PC-9 (cell line): ENCODE measurements at regions of chr6 and their contacts with region 1.

Region 1: DNA sequence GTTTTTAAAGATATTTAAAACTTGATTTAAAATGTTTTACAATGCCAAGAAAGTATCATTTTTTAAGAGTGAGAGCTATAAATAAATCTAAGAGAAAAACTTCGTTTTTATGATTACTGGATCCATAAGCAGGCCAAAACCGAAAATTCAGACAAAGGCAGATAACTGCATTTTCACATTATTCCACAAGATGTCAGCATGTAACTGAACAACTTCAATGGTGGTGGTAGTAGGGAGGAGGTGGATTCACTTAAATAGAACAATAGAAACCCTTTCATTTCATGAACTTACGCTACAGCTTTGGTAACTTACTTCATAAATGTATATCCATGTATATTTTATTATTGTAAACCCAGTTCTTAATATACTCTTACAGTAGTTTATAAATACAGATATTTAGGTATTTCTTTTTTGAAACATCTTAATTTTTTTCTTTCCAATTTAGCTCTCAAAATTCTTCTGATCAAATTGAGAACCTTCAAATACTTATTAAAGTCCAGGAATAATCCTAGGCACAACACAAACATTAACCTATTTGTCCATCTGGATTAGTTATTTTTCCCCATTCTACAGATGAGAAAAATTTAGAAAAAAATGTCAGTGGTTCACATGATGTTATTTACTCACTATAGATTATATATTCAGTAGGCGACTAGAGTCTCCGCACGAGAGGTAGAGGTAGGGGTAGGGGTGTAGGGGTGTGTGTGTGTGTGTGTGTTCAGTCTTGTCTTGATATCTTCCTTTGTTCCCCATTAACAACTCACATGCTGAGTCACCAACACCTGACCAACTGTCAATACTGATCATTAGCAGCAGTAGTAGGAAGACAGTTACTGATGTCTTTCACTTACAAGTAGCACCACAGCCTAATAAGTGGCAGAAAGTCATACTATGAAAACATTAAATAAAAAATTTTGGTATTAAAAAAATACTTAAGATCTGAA is 111.5 kb downstream of the ARHGAP18 start:
- DNase-seq: peak; percentile 5 to 63
- H3K4me3 ChIP-seq: no peak overlapping the region
- H3K27ac ChIP-seq: no peak overlapping the region
- H3K4me1 ChIP-seq: no peaks in the 10 kb centered on the region
- H3K27me3 ChIP-seq: no peaks in the 10 kb centered on the region
- CTCF ChIP-seq: peak; percentile 96

Region 2: GRCh38 chr6:128870746-128871145 is 727.8 kb before region 1 on chr6:
- CTCF ChIA-PET with region 1: no interaction called
- POLR2A ChIA-PET with region 1: interaction called, 15 read pairs
- intact Hi-C with region 1: no loop called
- DNase-seq: no peak
- H3K4me3 ChIP-seq: no peak overlapping the region
- H3K27ac ChIP-seq: no peak overlapping the region
- H3K4me1 ChIP-seq: no peaks in the 10 kb centered on the region
- H3K27me3 ChIP-seq: no peaks in the 10 kb centered on the region
- CTCF ChIP-seq: no peak

Region 3: DNA sequence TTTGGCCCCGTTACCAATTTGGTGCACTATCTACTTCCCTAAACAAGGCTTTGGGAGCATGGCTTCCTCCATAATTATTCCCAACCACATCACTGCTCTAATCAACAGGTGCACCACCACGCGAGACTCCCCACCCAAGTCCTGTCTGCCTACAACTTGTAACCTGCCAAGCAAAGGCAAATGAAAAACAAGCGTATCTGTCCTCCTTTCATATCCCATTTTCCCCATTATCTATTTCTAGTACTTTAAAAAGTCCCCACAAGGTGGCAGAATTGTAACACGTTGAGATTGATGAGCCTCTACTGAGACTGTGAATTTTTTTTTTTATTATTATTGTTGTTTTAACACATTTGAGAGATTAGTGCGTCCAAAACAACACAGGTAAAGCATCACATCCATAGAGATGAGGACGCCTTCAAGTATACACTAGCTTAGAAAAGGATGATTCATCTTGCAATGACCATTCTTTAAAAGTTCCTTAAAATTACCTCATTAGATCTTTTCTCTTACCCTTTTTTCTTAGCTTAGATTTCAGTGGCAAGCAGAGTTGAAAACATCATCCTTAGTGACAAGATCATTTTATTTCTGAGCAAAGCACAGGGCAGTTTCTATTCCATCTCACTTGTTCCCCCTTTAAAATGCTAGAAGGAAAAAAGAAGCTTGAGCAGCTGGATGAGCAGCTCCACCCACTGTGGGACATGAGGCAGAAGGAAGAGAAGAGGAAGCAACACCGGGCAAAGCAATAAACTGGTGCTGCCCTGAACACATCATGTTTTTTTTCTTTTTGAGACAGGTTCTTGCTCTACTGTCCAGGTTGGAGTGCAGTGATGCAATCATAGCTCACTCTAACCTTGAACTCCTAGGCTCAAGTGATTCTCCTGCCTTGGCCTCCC is 99.3 kb before region 1 on chr6:
- CTCF ChIA-PET with region 1: no interaction called
- POLR2A ChIA-PET with region 1: no interaction called
- intact Hi-C with region 1: loop called (anchors 2 kb)
- DNase-seq: peak in 1 of 2 experiments; percentile 57
- H3K4me3 ChIP-seq: peak overlapping the region; percentile 15; the same call in 1 of the 2 replicates
- H3K27ac ChIP-seq: no peak overlapping the region
- H3K4me1 ChIP-seq: peaks cover 25% of the 10 kb centered on the region
- H3K27me3 ChIP-seq: no peaks in the 10 kb centered on the region
- CTCF ChIP-seq: peak; percentile 96

Region 4: DNA sequence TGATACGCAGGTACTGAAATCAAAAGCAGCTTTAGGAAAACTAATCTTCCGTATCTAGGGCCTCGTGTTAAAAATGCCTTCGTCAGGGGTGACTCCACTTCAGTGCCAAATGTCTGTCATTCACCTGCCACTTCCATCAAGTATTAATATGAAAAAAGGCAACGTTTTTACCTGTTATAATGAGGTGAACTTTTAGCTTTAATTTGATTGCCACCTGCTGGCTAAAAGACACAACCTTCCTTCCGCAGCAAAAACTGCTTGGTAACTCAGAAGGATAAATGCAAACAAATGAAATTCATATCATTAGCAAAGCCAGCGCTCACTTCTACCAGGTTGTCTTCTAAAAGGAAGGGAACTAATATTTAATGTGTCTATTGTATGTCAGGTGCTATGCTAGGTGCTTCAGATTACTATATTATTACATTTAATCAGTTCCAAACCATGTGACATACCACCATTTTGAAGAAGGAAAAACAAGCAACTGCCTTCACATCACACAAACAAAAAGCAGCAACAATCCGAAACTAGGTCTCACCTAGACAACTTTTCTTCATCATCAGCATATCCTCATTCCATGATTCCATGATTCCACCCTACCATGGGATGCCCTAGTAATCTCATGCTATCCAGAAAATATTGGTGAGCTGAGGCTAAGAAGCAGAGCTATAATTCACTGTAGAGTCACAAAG is 132.1 kb after region 1 on chr6:
- CTCF ChIA-PET with region 1: interaction called, 6 read pairs
- POLR2A ChIA-PET with region 1: no interaction called
- intact Hi-C with region 1: loop called (anchors 1 kb)
- DNase-seq: peak in 1 of 2 experiments; percentile 50
- H3K4me3 ChIP-seq: no peak overlapping the region
- H3K27ac ChIP-seq: no peak overlapping the region
- H3K4me1 ChIP-seq: no peaks in the 10 kb centered on the region
- H3K27me3 ChIP-seq: no peaks in the 10 kb centered on the region
- CTCF ChIP-seq: peak; percentile 89

Region 5: DNA sequence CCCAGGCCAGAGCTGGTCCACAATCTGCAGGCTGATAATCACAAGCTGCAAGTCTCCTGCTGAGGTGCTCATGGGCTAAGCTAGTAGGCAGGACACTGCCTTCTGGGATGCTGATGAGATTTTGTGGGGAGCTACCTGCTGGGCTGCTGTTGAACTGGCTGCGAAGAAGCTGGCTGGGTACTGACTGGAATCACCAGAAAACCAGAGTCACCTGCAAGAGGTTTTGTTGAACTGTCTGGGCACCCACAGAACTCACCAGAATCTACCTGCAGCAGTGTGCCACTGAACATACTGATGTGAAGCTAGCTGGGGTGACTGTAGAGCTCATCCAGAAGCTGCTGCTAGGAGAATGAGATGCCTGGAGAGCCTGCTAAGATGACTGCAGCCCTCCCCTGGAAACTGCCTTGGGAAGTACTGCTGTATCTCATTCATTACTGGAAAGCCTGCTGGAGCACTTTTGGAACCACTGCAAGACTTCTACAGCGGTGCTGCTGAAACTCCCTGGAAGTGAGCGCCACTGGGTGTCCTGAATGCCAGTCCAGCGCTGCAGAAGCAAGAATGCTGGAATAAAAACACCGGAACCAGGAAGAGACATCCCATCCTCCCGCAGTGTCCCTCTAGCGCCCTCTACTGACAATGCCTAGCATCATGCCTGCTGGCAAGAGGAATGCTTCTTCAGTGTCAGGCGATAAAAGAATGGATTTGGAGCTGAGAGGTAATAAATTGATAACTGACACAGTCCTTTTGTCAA is 176.4 kb after region 1 on chr6:
- CTCF ChIA-PET with region 1: interaction called, 4 read pairs
- POLR2A ChIA-PET with region 1: no interaction called
- intact Hi-C with region 1: loop called (anchors 1 kb)
- DNase-seq: peak; percentile 58 to 66
- H3K4me3 ChIP-seq: no peak overlapping the region
- H3K27ac ChIP-seq: no peak overlapping the region
- H3K4me1 ChIP-seq: no peaks in the 10 kb centered on the region
- H3K27me3 ChIP-seq: no peaks in the 10 kb centered on the region
- CTCF ChIP-seq: peak; percentile 88

Region 6: GRCh38 chr6:129936329-129937165 is 338.0 kb after region 1 on chr6:
- CTCF ChIA-PET with region 1: no interaction called
- POLR2A ChIA-PET with region 1: no interaction called
- intact Hi-C with region 1: loop called (anchors 1 kb)
- DNase-seq: peak; percentile 21 to 58
- H3K4me3 ChIP-seq: no peak overlapping the region; the same call in 1 of the 2 replicates
- H3K27ac ChIP-seq: no peak overlapping the region
- H3K4me1 ChIP-seq: no peaks in the 10 kb centered on the region
- H3K27me3 ChIP-seq: no peaks in the 10 kb centered on the region
- CTCF ChIP-seq: peak; percentile 69

Region 7: GRCh38 chr6:130020907-130021629 is 422.6 kb after region 1 on chr6:
- CTCF ChIA-PET with region 1: no interaction called
- POLR2A ChIA-PET with region 1: interaction called, 7 read pairs
- intact Hi-C with region 1: loop called (anchors 2 kb)
- DNase-seq: peak; percentile 71 to 76
- H3K4me3 ChIP-seq: peak overlapping the region; percentile 70
- H3K27ac ChIP-seq: no peak overlapping the region
- H3K4me1 ChIP-seq: no peaks in the 10 kb centered on the region
- H3K27me3 ChIP-seq: no peaks in the 10 kb centered on the region
- CTCF ChIP-seq: peak; percentile 95